RWPE1 (cell line): ENCODE measurements at regions of chr10 and their contacts with region 1.

Region 1: DNA sequence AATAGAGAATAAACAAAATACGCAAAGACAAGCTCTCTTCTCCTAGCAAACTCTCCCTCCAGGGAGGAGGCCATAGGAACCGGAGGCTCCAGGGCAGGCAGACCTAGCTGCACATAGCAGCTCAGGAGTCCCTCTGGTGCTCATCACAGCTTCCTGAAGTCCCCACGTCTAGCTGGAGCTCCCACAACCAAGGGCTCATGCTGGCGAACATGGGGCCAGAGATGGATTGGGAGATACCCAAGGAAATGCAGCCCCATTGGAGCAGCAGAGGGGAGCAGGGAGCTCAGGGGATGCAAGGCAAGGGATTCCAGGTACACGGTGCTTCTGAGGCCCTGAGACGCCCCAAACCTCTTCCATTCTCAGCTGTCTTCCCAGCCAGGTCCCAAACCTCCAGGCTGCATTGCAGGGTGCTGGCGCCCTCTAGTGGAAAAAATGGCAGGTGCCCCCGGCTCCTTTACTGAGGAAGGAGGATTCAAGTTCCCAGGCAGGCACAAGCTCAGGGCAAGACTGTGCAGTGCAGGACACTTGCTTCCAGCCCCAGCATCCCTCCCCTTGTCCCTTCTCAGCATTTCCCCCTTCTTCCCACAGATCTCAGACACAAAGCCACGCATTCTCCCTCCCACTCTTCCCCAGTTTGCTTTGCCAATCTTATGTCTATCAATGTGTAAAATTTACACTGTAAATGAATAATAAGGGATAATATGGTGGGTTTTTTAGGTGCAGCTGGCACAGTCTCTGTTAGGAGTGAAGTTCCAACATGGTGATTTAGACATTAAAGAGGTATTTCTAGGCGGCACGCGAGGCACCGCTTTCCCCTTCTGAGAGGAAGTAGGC is 46.2 kb downstream of the GPAM start:
- DNase-seq: peak; percentile 93
- H3K27ac ChIP-seq: no peak overlapping the region
- CTCF ChIP-seq: peak; percentile 86

Region 2: DNA sequence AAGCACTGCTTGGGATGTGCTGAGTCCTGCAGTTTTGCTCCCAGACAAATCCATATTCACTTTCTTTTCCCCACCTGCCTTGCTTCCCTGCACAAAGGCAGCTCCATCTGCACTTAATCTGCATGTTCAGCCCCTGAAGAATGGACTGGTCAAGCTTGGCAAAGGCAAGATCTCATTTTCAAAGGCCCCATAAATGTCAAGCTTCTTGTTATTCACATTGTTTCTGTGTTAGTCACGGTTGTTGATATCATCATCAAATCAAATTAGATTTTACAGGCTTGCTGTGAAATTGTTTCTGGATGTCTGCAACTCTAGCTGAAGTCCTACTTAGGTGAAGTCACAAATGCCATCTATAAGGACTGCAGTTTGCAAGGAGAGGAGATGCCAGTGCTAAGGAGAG is 44.9 kb before region 1 on chr10:
- CTCF ChIA-PET with region 1: interaction called, 10 read pairs
- POLR2A ChIA-PET with region 1: no interaction called
- DNase-seq: no peak
- H3K27ac ChIP-seq: no peak overlapping the region
- CTCF ChIP-seq: no peak

Region 3: DNA sequence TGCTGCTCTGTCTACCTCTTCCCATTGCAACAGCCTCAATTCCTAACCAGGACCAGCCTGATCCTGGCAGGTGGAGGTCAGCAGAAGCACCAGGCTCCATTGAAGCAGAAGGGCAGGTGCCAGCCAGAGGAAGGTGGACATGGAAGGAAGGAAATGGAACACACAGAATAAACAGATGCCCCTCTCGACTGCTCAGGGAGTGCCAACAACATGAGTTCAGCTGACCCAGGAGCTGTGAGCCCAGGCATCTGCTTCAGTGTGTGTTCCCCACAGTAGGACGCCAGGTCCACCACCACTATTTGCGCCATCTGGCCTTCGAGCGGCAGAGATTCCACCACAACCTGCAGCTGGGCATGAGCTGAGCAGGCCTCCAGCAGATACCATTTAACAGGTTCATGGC is 10.5 kb before region 1 on chr10:
- CTCF ChIA-PET with region 1: interaction called, 15 read pairs
- POLR2A ChIA-PET with region 1: no interaction called
- DNase-seq: no peak
- H3K27ac ChIP-seq: no peak overlapping the region
- CTCF ChIP-seq: no peak

Region 4: DNA sequence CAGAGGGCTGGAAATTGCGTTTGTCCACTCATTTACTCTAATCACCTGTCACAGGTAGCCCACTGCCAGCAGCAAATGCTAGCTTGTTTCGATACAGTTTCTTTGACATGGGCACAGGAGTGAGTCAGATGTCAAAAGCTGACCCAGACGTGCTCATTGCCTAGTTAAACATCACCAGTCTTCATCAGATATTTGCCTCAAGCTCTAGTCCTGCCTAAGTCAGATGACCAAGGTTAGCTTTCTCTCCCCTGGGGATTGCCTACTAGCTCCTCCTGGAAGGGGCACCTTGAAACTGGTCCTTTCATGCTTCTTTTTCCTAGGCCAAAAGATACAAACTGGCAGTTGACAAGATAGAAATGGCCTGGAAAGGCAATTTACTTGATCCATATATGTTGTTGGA is 11.0 kb after region 1 on chr10:
- CTCF ChIA-PET with region 1: interaction called, 15 read pairs
- POLR2A ChIA-PET with region 1: no interaction called
- DNase-seq: no peak
- H3K27ac ChIP-seq: no peak overlapping the region
- CTCF ChIP-seq: no peak

Region 5: DNA sequence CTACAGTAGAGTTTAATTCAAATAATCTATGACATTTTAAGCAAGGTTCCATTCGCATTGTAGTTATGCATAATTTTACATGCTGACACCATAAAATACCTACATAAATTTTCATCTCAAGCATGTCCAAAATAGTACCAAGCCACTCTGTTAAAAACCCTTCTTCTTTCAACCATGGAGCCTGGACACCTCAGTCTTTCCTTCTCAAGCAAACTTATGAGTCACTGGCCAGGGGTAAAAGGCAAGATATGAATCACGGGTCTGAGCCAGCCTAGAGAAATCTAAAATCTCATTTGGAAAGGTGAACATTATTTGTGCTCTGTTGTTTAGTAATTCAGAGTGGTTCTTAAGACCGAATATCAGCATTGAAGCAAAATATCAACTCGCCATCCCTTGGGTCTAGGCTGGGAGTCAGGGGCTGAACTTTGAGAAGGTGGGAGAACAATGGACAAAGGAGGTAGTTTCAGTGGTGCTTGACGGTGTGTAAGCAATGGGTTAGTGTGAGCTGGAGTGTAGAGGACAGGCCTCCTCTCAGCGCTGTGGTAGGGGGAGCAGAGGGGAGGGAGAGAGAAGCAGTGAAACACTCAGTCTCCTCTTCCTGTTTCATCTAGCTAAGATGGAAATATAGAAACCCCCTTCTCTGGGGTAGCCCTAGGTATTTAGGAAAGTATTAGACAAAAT is 65.3 kb after region 1 on chr10:
- CTCF ChIA-PET with region 1: no interaction called
- POLR2A ChIA-PET with region 1: no interaction called
- DNase-seq: peak; percentile 78
- H3K27ac ChIP-seq: no peak overlapping the region
- CTCF ChIP-seq: no peak